ENCODE measurements at regions of chr11 and their contacts with region 1.

Region 1: GRCh38 chr11:66288671-66289547 is at the start of gene YIF1A:
- DNase-seq: peak; percentile 99 to 100
- H3K4me3 ChIP-seq: peak within 1 kb of the TSS; percentile 96
- H3K27ac ChIP-seq: peak within 1 kb of the TSS; percentile 71
- H3K4me1 ChIP-seq: peaks cover 19% of the 10 kb centered on the region
- H3K27me3 ChIP-seq: no peaks in the 10 kb centered on the region
- CTCF ChIP-seq: no peak
- total RNA-seq, gene YIF1A: 81.8 and 84.8 TPM in 2 replicates

Region 2: GRCh38 chr11:66159324-66159984 is 129.5 kb before region 1 on chr11:
- CTCF ChIA-PET with region 1: interaction called, 19 read pairs
- POLR2A ChIA-PET with region 1: no interaction called
- intact Hi-C with region 1: no loop called
- DNase-seq: no peak
- H3K4me3 ChIP-seq: no peak overlapping the region
- H3K27ac ChIP-seq: no peak overlapping the region
- H3K4me1 ChIP-seq: peaks cover 9% of the 10 kb centered on the region
- H3K27me3 ChIP-seq: no peaks in the 10 kb centered on the region
- CTCF ChIP-seq: no peak

Region 3: GRCh38 chr11:66183494-66184048 is 105.3 kb before region 1 on chr11:
- CTCF ChIA-PET with region 1: no interaction called
- POLR2A ChIA-PET with region 1: interaction called, 10 read pairs
- intact Hi-C with region 1: no loop called
- DNase-seq: no peak
- H3K4me3 ChIP-seq: no peak overlapping the region
- H3K27ac ChIP-seq: no peak overlapping the region
- H3K4me1 ChIP-seq: peaks cover 4% of the 10 kb centered on the region
- H3K27me3 ChIP-seq: no peaks in the 10 kb centered on the region
- CTCF ChIP-seq: no peak

Region 4: DNA sequence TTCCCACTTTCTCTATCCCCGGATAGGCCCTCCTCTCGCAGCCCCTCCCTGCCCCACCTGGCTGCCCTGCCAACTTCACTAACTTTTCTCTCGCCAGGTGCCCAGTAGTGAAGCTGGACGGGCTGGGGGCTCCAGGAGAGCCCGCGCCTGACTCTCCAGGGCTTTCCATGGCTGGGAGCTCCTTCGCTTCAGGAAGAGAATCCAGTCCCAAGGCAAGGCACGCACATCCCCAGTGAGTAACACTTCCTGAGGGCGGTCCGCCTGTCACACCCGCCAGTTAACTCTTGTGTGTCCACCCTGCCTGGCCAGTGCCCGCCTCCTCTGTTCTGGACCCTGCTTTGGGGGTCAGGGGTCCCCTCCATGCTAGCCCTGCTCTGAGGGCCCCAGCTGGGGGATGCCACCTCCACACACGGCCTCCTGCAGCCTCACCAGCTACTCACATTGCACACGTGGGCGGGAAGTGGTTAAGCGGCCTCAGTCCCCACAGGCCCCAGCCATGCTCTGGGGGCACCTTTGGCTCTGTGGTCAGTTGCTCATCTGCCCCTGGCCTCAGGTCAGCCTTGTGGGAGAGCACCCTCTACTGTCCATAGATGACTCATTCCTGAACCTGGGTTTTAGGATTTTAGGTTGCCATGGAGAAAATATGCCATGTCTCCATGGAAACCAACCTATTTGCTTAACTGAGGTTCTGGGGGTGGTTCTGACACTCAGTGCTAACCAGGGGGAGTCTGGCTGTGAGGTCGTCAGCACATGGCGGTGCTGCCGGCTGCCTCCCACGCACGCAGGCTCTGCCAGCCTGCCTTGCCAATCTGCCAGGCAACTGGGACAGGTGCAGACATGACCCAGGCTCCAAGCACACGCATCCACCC is 47.6 kb after region 1 on chr11 and contains the start of gene RIN1:
- CTCF ChIA-PET with region 1: interaction called, 3 read pairs
- POLR2A ChIA-PET with region 1: no interaction called
- intact Hi-C with region 1: loop called (anchors 1 kb)
- DNase-seq: peak; percentile 90 to 92
- H3K4me3 ChIP-seq: peak within 1 kb of the TSS; percentile 79
- H3K27ac ChIP-seq: peak within 1 kb of the TSS; percentile 65
- H3K4me1 ChIP-seq: peaks cover 16% of the 10 kb centered on the region
- H3K27me3 ChIP-seq: no peaks in the 10 kb centered on the region
- CTCF ChIP-seq: peak; percentile 52
- total RNA-seq, gene RIN1: 15.5 and 19.5 TPM in 2 replicates

Region 5: DNA sequence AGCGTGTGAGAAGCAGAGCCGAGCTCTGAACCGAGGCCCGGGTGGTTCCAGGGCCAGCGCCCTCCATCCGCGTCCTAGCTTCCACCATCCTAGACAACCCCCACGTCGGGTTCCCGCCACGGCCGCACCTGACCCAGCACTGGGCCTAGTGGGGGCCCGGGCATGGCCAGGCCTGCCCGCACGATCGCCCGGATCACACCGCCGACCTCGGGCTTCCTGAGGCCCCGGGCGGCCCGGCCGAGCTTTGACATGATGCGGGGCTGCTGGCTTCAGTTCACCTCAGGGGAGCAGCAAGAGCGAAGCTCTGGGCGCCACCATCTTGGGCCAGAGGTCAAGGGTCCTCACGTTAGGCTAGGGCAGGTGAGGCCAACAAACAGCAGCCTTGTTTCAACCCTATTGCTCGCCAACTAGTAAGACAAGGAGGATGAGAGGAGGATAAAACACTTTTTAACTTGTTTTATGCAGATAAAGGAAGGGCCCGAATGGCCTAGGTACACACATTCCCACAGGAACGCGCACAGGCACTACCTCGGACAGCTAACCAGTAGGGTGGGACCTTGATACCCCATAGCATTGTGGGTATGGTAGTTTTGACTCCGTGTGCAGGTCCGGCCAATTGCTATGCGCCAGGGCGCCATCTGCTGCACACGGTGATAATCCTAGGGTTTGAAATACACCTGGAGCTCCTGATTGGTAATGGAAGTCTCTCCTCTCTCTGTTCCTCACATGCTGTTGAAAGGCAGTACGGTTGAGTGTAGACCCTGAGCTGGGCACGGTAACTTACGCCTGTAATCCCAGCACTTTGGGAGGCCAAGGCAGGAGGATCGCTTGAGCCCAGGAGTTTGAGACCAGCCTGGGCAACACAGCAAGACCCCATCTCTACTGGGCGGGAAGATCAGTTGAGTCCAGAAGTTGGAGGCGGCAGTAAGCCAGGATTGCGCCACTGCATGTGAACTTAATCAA is 149.9 kb after region 1 on chr11 and contains the start of gene MRPL11:
- CTCF ChIA-PET with region 1: no interaction called
- POLR2A ChIA-PET with region 1: interaction called, 10 read pairs
- intact Hi-C with region 1: no loop called
- DNase-seq: peak; percentile 91
- H3K4me3 ChIP-seq: peak within 1 kb of the TSS; percentile 71
- H3K27ac ChIP-seq: peak within 1 kb of the TSS; percentile 58
- H3K4me1 ChIP-seq: peaks cover 12% of the 10 kb centered on the region
- H3K27me3 ChIP-seq: no peaks in the 10 kb centered on the region
- CTCF ChIP-seq: peak; percentile 78
- total RNA-seq, gene MRPL11: 138 and 140 TPM in 2 replicates

Measured in PC-9 (cell line).